HCT116 (cell line): ENCODE measurements at regions of chr3 and their contacts with region 1.

Region 1: GRCh38 chr3:186617038-186617946 is 4.4 kb downstream of the AHSG start:
- DNase-seq: peak; percentile 66
- ATAC-seq: peak; percentile 98
- H3K4me3 ChIP-seq: peak overlapping the region; percentile 41 to 55
- H3K27ac ChIP-seq: no peak overlapping the region
- H3K4me1 ChIP-seq: peaks cover 2 to 21% of the 10 kb centered on the region in 2 experiments; a peak in 2 of 4 replicates
- H3K27me3 ChIP-seq: no peaks in the 10 kb centered on the region
- CTCF ChIP-seq: peak; percentile 77 to 94 (median 91)
- POLR2A ChIP-seq: no peak
- RAD21 ChIP-seq: peak; percentile 94

Region 2: GRCh38 chr3:185983495-185984141 is 633.7 kb before region 1 on chr3:
- CTCF ChIA-PET with region 1: no interaction called
- POLR2A ChIA-PET with region 1: interaction called, 5 read pairs
- RAD21 ChIA-PET with region 1: no interaction called
- intact Hi-C with region 1: loop called (anchors 2 kb)
- DNase-seq: peak; percentile 59
- ATAC-seq: peak; percentile 99
- H3K4me3 ChIP-seq: no peak overlapping the region
- H3K27ac ChIP-seq: no peak overlapping the region
- H3K4me1 ChIP-seq: peaks cover 0 to 5% of the 10 kb centered on the region in 2 experiments; a peak in 1 of 4 replicates
- H3K27me3 ChIP-seq: no peaks in the 10 kb centered on the region
- CTCF ChIP-seq: peak; percentile 88 to 96 (median 91)
- POLR2A ChIP-seq: no peak
- RAD21 ChIP-seq: peak; percentile 98

Region 3: GRCh38 chr3:186464424-186465093 is 152.7 kb before region 1 on chr3:
- CTCF ChIA-PET with region 1: no interaction called
- POLR2A ChIA-PET with region 1: no interaction called
- RAD21 ChIA-PET with region 1: no interaction called
- intact Hi-C with region 1: no loop called
- DNase-seq: no peak
- ATAC-seq: peak; percentile 89
- H3K4me3 ChIP-seq: no peak overlapping the region
- H3K27ac ChIP-seq: no peak overlapping the region
- H3K4me1 ChIP-seq: peaks cover 0 to 3% of the 10 kb centered on the region in 2 experiments; a peak in 1 of 4 replicates
- H3K27me3 ChIP-seq: peaks cover 8% of the 10 kb centered on the region; the same call in 1 of the 2 replicates
- CTCF ChIP-seq: peak in 2 of 3 experiments; percentile 35 to 51; a peak in 4 of 6 replicates
- POLR2A ChIP-seq: no peak
- RAD21 ChIP-seq: 0 out of 2 replicates have a peak, but pooled peaks have one; percentile 10

Region 4: DNA sequence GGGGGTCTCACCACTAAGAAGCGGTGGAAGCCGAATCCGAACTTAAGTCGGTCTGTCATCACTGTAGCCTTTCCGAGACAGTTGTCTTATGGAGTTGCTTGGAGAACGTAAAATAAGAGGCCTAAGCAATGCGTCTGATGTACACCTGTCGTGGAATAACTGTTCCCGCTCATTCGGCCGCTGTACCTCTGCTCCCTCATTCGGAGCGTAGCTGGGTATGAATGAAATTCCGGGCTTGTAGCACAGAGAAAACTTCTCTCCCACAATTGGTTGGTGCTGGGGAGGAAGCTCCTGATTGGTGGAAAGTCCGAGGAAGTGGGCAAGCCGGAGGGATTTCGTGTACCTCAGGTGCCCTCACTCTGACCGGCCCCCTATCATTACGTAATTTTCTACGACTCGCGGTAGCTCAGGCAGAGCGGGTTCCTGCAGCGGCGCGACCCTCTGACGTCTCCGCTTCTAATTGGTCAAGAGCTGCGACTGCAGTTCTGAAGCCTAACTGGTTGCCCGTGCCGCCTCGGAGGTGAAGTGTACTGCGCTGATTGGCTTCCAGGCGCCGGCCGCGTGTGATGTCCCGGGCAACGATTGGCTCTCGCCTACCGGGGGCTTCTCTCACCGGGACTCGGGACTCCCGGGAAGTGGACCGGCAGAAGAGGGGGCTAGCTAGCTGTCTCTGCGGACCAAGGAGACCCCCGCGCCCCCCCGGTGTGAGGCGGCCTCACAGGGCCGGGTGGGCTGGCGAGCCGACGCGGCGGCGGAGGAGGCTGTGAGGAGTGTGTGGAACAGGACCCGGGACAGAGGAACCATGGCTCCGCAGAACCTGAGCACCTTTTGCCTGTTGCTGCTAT is 47.0 kb before region 1 on chr3 and contains the start of gene DNAJB11:
- CTCF ChIA-PET with region 1: interaction called, 12 read pairs
- POLR2A ChIA-PET with region 1: interaction called, 4 read pairs
- RAD21 ChIA-PET with region 1: interaction called in 1 of 2 experiments, 3 read pairs
- intact Hi-C with region 1: no loop called
- DNase-seq: peak; percentile 100
- ATAC-seq: peak; percentile 86
- H3K4me3 ChIP-seq: peak within 1 kb of the TSS; percentile 87 to 94
- H3K27ac ChIP-seq: peak within 1 kb of the TSS; percentile 52
- H3K4me1 ChIP-seq: peaks cover 11 to 32% of the 10 kb centered on the region in 2 experiments
- H3K27me3 ChIP-seq: no peaks in the 10 kb centered on the region
- CTCF ChIP-seq: no peak
- POLR2A ChIP-seq: peak; percentile 86
- RAD21 ChIP-seq: no peak
- total RNA-seq, gene DNAJB11: 54.3 TPM

Region 5: GRCh38 chr3:186598108-186598784 is 19.0 kb before region 1 on chr3:
- CTCF ChIA-PET with region 1: interaction called, 14 read pairs
- POLR2A ChIA-PET with region 1: no interaction called
- RAD21 ChIA-PET with region 1: no interaction called
- intact Hi-C with region 1: no loop called
- DNase-seq: no peak
- ATAC-seq: no peak
- H3K4me3 ChIP-seq: no peak overlapping the region
- H3K27ac ChIP-seq: no peak overlapping the region
- H3K4me1 ChIP-seq: no peaks in the 10 kb centered on the region
- H3K27me3 ChIP-seq: no peaks in the 10 kb centered on the region
- CTCF ChIP-seq: no peak
- POLR2A ChIP-seq: no peak
- RAD21 ChIP-seq: no peak

Region 6: DNA sequence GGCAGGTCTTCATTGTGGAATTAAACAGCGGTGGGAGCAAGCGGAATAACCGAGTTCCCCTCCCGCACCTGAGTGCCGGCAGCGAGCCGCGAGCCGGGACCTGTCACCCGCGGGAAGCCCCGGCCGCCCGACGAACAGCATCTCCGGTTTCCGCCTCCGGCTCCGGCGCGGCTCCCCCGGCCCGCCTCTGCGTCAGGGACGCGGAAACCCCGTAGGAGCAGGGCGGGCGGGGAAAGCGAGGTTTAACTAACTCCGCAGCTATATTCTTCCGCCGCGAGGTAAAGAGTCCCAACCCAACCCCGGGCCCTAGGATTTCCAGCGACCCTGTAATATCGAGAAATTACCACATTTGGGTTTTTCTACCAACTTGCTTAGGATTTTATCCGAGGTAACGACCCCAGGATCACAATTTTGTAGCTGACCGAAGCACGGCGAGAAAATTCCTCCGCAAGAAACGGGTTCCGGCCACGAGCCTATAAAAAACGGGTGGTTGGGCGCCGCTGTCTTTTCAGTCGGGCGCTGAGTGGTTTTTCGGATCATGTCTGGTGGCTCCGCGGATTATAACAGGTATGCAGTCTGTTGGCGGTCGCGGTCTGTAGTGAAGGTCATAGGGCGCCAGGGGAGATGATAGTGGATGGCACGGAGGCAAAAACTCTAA is 165.9 kb after region 1 on chr3 and contains the start of gene EIF4A2:
- CTCF ChIA-PET with region 1: interaction called, 3 read pairs
- POLR2A ChIA-PET with region 1: interaction called, 11 read pairs
- RAD21 ChIA-PET with region 1: no interaction called
- intact Hi-C with region 1: no loop called
- DNase-seq: peak; percentile 78
- ATAC-seq: peak; percentile 75
- H3K4me3 ChIP-seq: peak within 1 kb of the TSS; percentile 87 to 92
- H3K27ac ChIP-seq: peak within 1 kb of the TSS; percentile 99
- H3K4me1 ChIP-seq: peaks cover 0 to 13% of the 10 kb centered on the region in 2 experiments; a peak in 2 of 4 replicates
- H3K27me3 ChIP-seq: no peaks in the 10 kb centered on the region
- CTCF ChIP-seq: no peak
- POLR2A ChIP-seq: peak; percentile 100
- RAD21 ChIP-seq: no peak
- total RNA-seq, gene EIF4A2: 398 TPM

Region 7: GRCh38 chr3:187714404-187714979 is 1097.2 kb after region 1 on chr3:
- CTCF ChIA-PET with region 1: no interaction called
- POLR2A ChIA-PET with region 1: no interaction called
- RAD21 ChIA-PET with region 1: no interaction called
- intact Hi-C with region 1: loop called (anchors 1 kb)
- DNase-seq: peak; percentile 72
- ATAC-seq: peak; percentile 96
- H3K4me3 ChIP-seq: no peak overlapping the region
- H3K27ac ChIP-seq: no peak overlapping the region
- H3K4me1 ChIP-seq: peaks cover 3% of the 10 kb centered on the region in 2 experiments; a peak in 2 of 4 replicates
- H3K27me3 ChIP-seq: no peaks in the 10 kb centered on the region
- CTCF ChIP-seq: peak; percentile 85 to 95 (median 93)
- POLR2A ChIP-seq: no peak
- RAD21 ChIP-seq: peak; percentile 97